Heart right ventricle (tissue), 16 donors: ENCODE measurements at regions of chrX and their contacts with region 1.

Region 1: GRCh38 chrX:43969504-43970501 is 3.4 kb downstream of the NDP start:
- DNase-seq: no peak
- ATAC-seq: no peak
- H3K4me3 ChIP-seq: no peak overlapping the region
- H3K27ac ChIP-seq: no peak overlapping the region
- H3K4me1 ChIP-seq: peaks cover 0 to 6% (median 0%) of the 10 kb centered on the region in 9 donors
- H3K27me3 ChIP-seq: peaks cover 0 to 94% (median 0%) of the 10 kb centered on the region in 7 donors
- CTCF ChIP-seq: no peak

Region 2: GRCh38 chrX:44025555-44025954 is 55.8 kb after region 1 on chrX:
- intact Hi-C with region 1: loop called in 3 of 10 experiments (anchors 10 kb)
- DNase-seq: no peak
- ATAC-seq: no peak
- H3K4me3 ChIP-seq: no peak overlapping the region
- H3K27ac ChIP-seq: no peak overlapping the region
- H3K4me1 ChIP-seq: no peaks in the 10 kb centered on the region
- H3K27me3 ChIP-seq: peaks cover 0 to 47% (median 0%) of the 10 kb centered on the region in 7 donors
- CTCF ChIP-seq: no peak

Region 3: GRCh38 chrX:44244008-44244407 is 274.2 kb after region 1 on chrX:
- intact Hi-C with region 1: loop called in 1 of 10 experiments (anchors 10 kb)
- DNase-seq: no peak
- ATAC-seq: no peak
- H3K4me3 ChIP-seq: no peak overlapping the region
- H3K27ac ChIP-seq: no peak overlapping the region
- H3K4me1 ChIP-seq: no peaks in the 10 kb centered on the region
- H3K27me3 ChIP-seq: peaks cover 0 to 79% (median 0%) of the 10 kb centered on the region in 7 donors
- CTCF ChIP-seq: peak in 8 of 9 donors; percentile 5 to 57 (median 43)